ENCODE measurements at regions of chr10 and their contacts with region 1.

Region 1: GRCh38 chr10:93652857-93653256 is 40.5 kb downstream of the PDE6C start:
- DNase-seq: peak; percentile 79
- ATAC-seq: peak; percentile 85
- H3K4me3 ChIP-seq: 0 out of 2 replicates have a peak overlapping the region, but pooled peaks have one; percentile 20
- H3K27ac ChIP-seq: peak overlapping the region; percentile 38
- H3K4me1 ChIP-seq: peaks cover 24% of the 10 kb centered on the region
- H3K27me3 ChIP-seq: no peaks in the 10 kb centered on the region
- CTCF ChIP-seq: no peak

Region 2: GRCh38 chr10:93541402-93542357 is 111.2 kb before region 1 on chr10:
- CTCF ChIA-PET with region 1: no interaction called
- POLR2A ChIA-PET with region 1: no interaction called
- intact Hi-C with region 1: loop called (anchors 10 kb)
- DNase-seq: peak; percentile 72
- ATAC-seq: peak; percentile 97
- H3K4me3 ChIP-seq: peak overlapping the region; percentile 60
- H3K27ac ChIP-seq: no peak overlapping the region
- H3K4me1 ChIP-seq: peaks cover 8% of the 10 kb centered on the region; the same call in 1 of the 2 replicates
- H3K27me3 ChIP-seq: no peaks in the 10 kb centered on the region
- CTCF ChIP-seq: peak; percentile 91

Region 3: DNA sequence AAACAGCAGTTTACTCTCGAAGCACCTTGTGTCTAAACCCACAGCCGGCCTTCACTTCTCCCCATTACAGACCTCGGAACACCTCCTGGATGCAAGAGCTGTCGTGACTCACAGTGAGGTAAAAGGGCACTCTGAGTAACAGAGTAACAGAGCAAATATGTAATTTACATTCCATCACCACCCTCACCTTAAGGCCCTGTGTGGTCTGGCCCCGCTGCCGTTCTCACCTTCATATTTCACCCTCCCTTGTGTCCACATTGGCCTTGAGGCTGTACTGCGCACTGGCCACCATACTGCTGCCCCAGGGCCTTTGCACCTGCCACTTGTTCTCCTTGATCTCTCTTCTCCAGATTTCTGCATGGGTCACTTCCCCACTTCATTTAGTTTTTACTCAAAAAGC is 73.8 kb before region 1 on chr10:
- CTCF ChIA-PET with region 1: no interaction called
- POLR2A ChIA-PET with region 1: no interaction called
- intact Hi-C with region 1: loop called (anchors 2 kb)
- DNase-seq: peak; percentile 92
- ATAC-seq: peak; percentile 87
- H3K4me3 ChIP-seq: peak overlapping the region; percentile 31; the same call in 1 of the 2 replicates
- H3K27ac ChIP-seq: peak overlapping the region; percentile 64
- H3K4me1 ChIP-seq: peaks cover 27% of the 10 kb centered on the region
- H3K27me3 ChIP-seq: no peaks in the 10 kb centered on the region
- CTCF ChIP-seq: no peak

Region 4: DNA sequence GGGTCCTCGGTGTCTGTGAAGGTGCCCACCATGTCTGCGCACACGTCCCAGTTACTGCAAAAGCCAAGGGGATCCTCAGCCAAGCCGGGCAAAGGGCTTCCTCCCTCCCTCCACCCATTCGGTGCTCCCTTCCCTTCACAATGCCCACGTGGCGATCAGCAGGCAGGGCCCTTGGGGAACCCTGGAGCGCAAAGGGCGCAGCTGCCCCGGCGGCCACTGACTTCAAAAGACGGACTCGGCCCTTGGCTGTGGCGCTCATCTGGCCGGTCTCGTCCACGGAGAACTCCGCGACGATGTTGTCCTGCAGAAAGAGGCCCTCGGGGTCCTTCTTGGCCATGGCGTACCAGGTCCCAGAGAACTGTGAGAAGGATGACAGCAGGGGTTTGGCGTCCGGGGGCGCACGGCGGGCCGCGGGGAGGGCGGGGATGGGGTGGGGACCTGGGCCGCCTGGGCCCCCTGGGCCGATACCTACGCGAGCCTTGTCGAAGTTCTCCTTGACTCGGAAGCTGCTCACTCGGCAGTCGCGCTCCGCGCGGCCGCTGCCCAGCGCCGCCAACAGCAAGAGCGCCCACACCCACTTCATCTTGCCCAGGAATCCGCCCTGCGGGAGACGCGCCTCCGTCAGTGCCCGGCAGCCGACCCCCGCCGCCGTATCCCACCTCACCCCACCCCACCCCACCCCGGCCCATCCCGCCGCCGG is 52.3 kb before region 1 on chr10:
- CTCF ChIA-PET with region 1: no interaction called
- POLR2A ChIA-PET with region 1: no interaction called
- intact Hi-C with region 1: loop called (anchors 10 kb)
- DNase-seq: no peak
- ATAC-seq: peak; percentile 27
- H3K4me3 ChIP-seq: no peak overlapping the region
- H3K27ac ChIP-seq: no peak overlapping the region
- H3K4me1 ChIP-seq: peaks cover 8% of the 10 kb centered on the region; the same call in 1 of the 2 replicates
- H3K27me3 ChIP-seq: no peaks in the 10 kb centered on the region
- CTCF ChIP-seq: no peak